ENCODE measurements at regions of chr6 and their contacts with region 1.

Region 1: GRCh38 chr6:49625140-49625539 is 11.5 kb downstream of the RHAG start:
- DNase-seq: no peak
- ATAC-seq: no peak
- H3K4me3 ChIP-seq: no peak overlapping the region
- H3K27ac ChIP-seq: no peak overlapping the region
- H3K4me1 ChIP-seq: peaks cover 6 to 8% of the 10 kb centered on the region in 2 experiments; a peak in 2 of 4 replicates
- H3K27me3 ChIP-seq: no peaks in the 10 kb centered on the region
- CTCF ChIP-seq: no peak
- POLR2A ChIP-seq: no peak
- RAD21 ChIP-seq: no peak

Region 2: GRCh38 chr6:49849213-49849907 is 224.2 kb after region 1 on chr6:
- CTCF ChIA-PET with region 1: interaction called, 25 read pairs
- POLR2A ChIA-PET with region 1: no interaction called
- RAD21 ChIA-PET with region 1: interaction called, 6 read pairs
- intact Hi-C with region 1: loop called (anchors 1 kb)
- DNase-seq: peak; percentile 56
- ATAC-seq: peak; percentile 88
- H3K4me3 ChIP-seq: no peak overlapping the region
- H3K27ac ChIP-seq: no peak overlapping the region
- H3K4me1 ChIP-seq: no peaks in the 10 kb centered on the region
- H3K27me3 ChIP-seq: no peaks in the 10 kb centered on the region
- CTCF ChIP-seq: peak; percentile 33 to 73 (median 65); a peak in 4 of 6 replicates
- POLR2A ChIP-seq: no peak
- RAD21 ChIP-seq: peak; percentile 82

Region 3: GRCh38 chr6:50030777-50031562 is 405.8 kb after region 1 on chr6:
- CTCF ChIA-PET with region 1: interaction called, 11 read pairs
- POLR2A ChIA-PET with region 1: no interaction called
- RAD21 ChIA-PET with region 1: no interaction called
- intact Hi-C with region 1: no loop called
- DNase-seq: peak; percentile 46
- ATAC-seq: peak; percentile 98
- H3K4me3 ChIP-seq: no peak overlapping the region
- H3K27ac ChIP-seq: no peak overlapping the region
- H3K4me1 ChIP-seq: peaks cover 0 to 5% of the 10 kb centered on the region in 2 experiments; a peak in 1 of 4 replicates
- H3K27me3 ChIP-seq: no peaks in the 10 kb centered on the region
- CTCF ChIP-seq: peak; percentile 55 to 74 (median 68); a peak in 5 of 6 replicates
- POLR2A ChIP-seq: no peak
- RAD21 ChIP-seq: peak; percentile 55

Region 4: DNA sequence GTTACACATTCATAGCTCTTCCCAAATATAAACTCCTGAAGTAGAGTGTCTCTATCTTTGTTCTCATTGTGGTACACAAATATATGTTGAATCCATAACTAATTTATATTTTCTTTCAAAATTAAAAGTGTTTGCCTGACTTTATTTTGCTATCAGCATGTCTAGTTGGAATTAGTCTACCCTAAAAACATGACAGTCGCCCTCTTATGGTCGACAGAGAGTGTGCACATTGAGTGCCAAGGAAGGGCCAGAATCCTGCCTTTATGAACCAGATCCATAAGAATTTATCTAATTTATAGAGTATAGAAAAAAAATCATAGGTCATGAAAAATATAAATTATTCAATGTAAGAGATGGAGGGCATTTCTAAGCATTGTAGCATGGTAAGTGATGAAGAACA is 436.9 kb after region 1 on chr6:
- CTCF ChIA-PET with region 1: no interaction called
- POLR2A ChIA-PET with region 1: no interaction called
- RAD21 ChIA-PET with region 1: no interaction called
- intact Hi-C with region 1: loop called (anchors 2 kb)
- DNase-seq: peak; percentile 2
- ATAC-seq: peak; percentile 62; the same call in 1 of the 2 replicates
- H3K4me3 ChIP-seq: no peak overlapping the region
- H3K27ac ChIP-seq: no peak overlapping the region
- H3K4me1 ChIP-seq: no peaks in the 10 kb centered on the region
- H3K27me3 ChIP-seq: no peaks in the 10 kb centered on the region
- CTCF ChIP-seq: peak in 2 of 3 experiments; percentile 65 to 76; a peak in 4 of 6 replicates
- POLR2A ChIP-seq: no peak
- RAD21 ChIP-seq: peak; percentile 19; the same call in 1 of the 2 replicates